CD4-positive, alpha-beta memory T cell (primary cell): ENCODE measurements at regions of chr4 and their contacts with region 1.

Region 1: GRCh38 chr4:40228497-40229365 is 31.9 kb downstream of the RHOH start:
- DNase-seq: no peak
- H3K4me3 ChIP-seq: peak overlapping the region in 1 of 2 donors; percentile 33
- H3K4me3 Mint-ChIP-seq: peak overlapping the region; percentile 69 to 93 (median 77)
- H3K27ac ChIP-seq: peak overlapping the region; percentile 72
- H3K27ac Mint-ChIP-seq: peak overlapping the region; percentile 92 to 100 (median 93)
- H3K4me1 ChIP-seq: peaks cover 100% of the 10 kb centered on the region
- H3K4me1 Mint-ChIP-seq: peaks cover 68 to 98% (median 84%) of the 10 kb centered on the region in 4 donors
- H3K27me3 ChIP-seq: no peaks in the 10 kb centered on the region
- H3K27me3 Mint-ChIP-seq: no peaks in the 10 kb centered on the region

Region 2: GRCh38 chr4:40149960-40150385 is 78.8 kb before region 1 on chr4:
- CTCF ChIA-PET with region 1: interaction called, 5 read pairs
- POLR2A ChIA-PET with region 1: interaction called, 7 read pairs
- intact Hi-C with region 1: loop called (anchors 5 kb)
- DNase-seq: peak; percentile 75 to 81 (median 77)
- H3K4me3 ChIP-seq: no peak overlapping the region
- H3K4me3 Mint-ChIP-seq: peak overlapping the region in 2 of 8 donors; percentile 44 to 65
- H3K27ac ChIP-seq: no peak overlapping the region
- H3K27ac Mint-ChIP-seq: peak overlapping the region; percentile 27 to 91 (median 77)
- H3K4me1 ChIP-seq: peaks cover 22% of the 10 kb centered on the region
- H3K4me1 Mint-ChIP-seq: peaks cover 20 to 34% (median 25%) of the 10 kb centered on the region in 4 donors
- H3K27me3 ChIP-seq: no peaks in the 10 kb centered on the region
- H3K27me3 Mint-ChIP-seq: no peaks in the 10 kb centered on the region

Region 3: DNA sequence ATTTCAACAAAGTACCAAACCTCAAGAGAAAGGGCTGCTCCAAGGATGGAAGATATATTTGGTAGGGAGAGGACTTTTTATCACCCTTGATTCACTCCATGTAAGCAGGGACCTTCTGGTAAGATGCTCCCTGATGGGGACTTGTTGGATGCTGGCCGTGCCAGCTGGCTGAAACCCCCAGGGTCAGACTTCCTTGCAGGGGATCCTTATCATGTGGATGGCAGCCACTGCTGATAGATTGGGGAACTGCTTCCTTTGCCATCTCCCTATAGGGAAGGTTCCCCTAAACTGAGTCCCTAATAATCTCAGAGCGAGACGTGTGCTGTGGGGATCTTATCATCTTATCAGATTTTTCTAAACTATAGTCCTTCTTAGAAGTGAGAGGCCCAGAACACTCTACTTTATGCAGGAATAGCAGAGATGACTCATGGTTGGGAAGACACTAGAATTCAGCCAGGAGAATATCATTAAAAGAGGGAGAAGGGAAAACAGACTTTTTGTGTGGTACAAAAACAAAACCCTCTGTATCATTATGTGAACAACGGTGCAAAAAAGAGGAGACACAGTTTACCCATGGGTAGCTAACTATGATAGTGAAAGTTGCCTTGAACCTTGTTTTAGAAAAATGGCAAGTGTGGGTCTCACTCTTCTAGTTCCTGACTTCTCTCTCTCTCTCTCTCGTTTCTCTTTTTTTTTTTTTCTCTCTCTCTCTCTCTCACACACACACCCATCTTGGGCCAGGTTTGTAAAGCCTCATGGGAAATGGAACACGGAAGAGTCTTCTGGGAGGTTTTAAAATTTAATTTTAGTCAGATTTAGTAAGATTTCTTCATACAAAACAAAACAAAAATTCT is 15.8 kb before region 1 on chr4:
- CTCF ChIA-PET with region 1: interaction called, 31 read pairs
- POLR2A ChIA-PET with region 1: interaction called, 1,182 read pairs
- intact Hi-C with region 1: loop called (anchors 1 kb)
- DNase-seq: no peak
- H3K4me3 ChIP-seq: peak overlapping the region; percentile 2 to 11
- H3K4me3 Mint-ChIP-seq: peak overlapping the region; percentile 61 to 87 (median 80)
- H3K27ac ChIP-seq: peak overlapping the region; percentile 78
- H3K27ac Mint-ChIP-seq: peak overlapping the region; percentile 95 to 100 (median 96)
- H3K4me1 ChIP-seq: peaks cover 98% of the 10 kb centered on the region
- H3K4me1 Mint-ChIP-seq: peaks cover 74 to 95% (median 85%) of the 10 kb centered on the region in 4 donors
- H3K27me3 ChIP-seq: no peaks in the 10 kb centered on the region
- H3K27me3 Mint-ChIP-seq: no peaks in the 10 kb centered on the region

Region 4: GRCh38 chr4:40247350-40247749 is 18.6 kb after region 1 on chr4:
- CTCF ChIA-PET with region 1: interaction called, 11 read pairs
- POLR2A ChIA-PET with region 1: interaction called, 36 read pairs
- intact Hi-C with region 1: loop called (anchors 2 kb)
- DNase-seq: peak; percentile 66 to 82 (median 69)
- H3K4me3 ChIP-seq: no peak overlapping the region
- H3K4me3 Mint-ChIP-seq: peak overlapping the region in 7 of 8 donors; percentile 19 to 75 (median 58)
- H3K27ac ChIP-seq: peak overlapping the region; percentile 68
- H3K27ac Mint-ChIP-seq: peak overlapping the region; percentile 80 to 100 (median 96)
- H3K4me1 ChIP-seq: peaks cover 88% of the 10 kb centered on the region
- H3K4me1 Mint-ChIP-seq: peaks cover 65 to 92% (median 74%) of the 10 kb centered on the region in 4 donors
- H3K27me3 ChIP-seq: no peaks in the 10 kb centered on the region
- H3K27me3 Mint-ChIP-seq: no peaks in the 10 kb centered on the region

Region 5: GRCh38 chr4:40301603-40302002 is 72.9 kb after region 1 on chr4:
- CTCF ChIA-PET with region 1: interaction called, 200 read pairs
- POLR2A ChIA-PET with region 1: interaction called, 79 read pairs
- intact Hi-C with region 1: loop called (anchors 1 kb)
- DNase-seq: peak; percentile 82 to 90 (median 89)
- H3K4me3 ChIP-seq: peak overlapping the region in 1 of 2 donors; percentile 2
- H3K4me3 Mint-ChIP-seq: peak overlapping the region; percentile 23 to 92 (median 78)
- H3K27ac ChIP-seq: peak overlapping the region; percentile 62
- H3K27ac Mint-ChIP-seq: peak overlapping the region in 6 of 7 donors; percentile 96 to 99 (median 97)
- H3K4me1 ChIP-seq: peaks cover 94% of the 10 kb centered on the region
- H3K4me1 Mint-ChIP-seq: peaks cover 66 to 90% (median 79%) of the 10 kb centered on the region in 4 donors
- H3K27me3 ChIP-seq: no peaks in the 10 kb centered on the region
- H3K27me3 Mint-ChIP-seq: no peaks in the 10 kb centered on the region

Region 6: DNA sequence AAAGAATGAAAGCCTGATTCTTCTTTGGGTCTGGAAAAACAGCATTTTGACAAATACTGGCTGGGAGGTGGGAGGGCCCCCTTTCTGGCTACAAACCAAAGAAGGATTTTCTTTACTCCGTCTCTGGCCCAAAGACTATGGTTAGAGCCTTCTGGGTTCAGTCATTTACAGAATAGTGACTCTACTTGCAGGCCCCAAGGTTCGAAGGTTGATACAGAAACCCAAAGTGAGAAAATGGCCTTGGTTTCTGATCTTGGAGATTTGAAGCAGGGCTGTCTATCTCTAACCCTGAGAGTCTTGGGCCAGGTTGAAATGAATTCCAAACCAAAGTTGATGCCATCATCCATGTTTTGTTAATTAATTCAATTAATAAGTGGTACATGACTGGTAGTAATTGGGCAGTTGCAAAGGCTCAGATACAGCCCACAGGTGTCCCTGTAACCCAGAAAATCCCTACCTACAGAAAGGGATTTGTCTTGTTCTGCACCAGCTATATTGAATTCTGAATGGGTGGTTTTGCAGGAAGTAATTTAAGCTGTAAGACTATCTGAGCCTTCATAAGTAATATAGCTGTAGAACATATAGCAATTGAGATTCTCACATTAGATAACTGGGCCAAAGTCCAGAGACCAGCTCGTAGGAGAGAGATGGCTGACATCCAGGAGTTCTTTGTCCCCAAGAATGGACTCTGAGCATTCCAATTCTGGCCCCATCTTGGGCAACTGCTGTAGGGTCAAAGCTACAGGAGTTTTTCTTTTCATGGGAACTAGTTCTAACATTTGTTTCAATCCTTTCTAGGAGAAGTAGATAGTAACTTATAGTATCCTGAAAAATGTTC is 140.9 kb after region 1 on chr4:
- CTCF ChIA-PET with region 1: no interaction called
- POLR2A ChIA-PET with region 1: no interaction called
- intact Hi-C with region 1: no loop called
- DNase-seq: no peak
- H3K4me3 ChIP-seq: no peak overlapping the region
- H3K4me3 Mint-ChIP-seq: no peak overlapping the region
- H3K27ac ChIP-seq: no peak overlapping the region
- H3K27ac Mint-ChIP-seq: no peak overlapping the region
- H3K4me1 ChIP-seq: no peaks in the 10 kb centered on the region
- H3K4me1 Mint-ChIP-seq: no peaks in the 10 kb centered on the region
- H3K27me3 ChIP-seq: no peaks in the 10 kb centered on the region
- H3K27me3 Mint-ChIP-seq: peaks cover 0 to 5% of the 10 kb centered on the region in 2 donors